GM12878 (cell line): ENCODE measurements at regions of chr14 and their contacts with region 1.

Region 1: DNA sequence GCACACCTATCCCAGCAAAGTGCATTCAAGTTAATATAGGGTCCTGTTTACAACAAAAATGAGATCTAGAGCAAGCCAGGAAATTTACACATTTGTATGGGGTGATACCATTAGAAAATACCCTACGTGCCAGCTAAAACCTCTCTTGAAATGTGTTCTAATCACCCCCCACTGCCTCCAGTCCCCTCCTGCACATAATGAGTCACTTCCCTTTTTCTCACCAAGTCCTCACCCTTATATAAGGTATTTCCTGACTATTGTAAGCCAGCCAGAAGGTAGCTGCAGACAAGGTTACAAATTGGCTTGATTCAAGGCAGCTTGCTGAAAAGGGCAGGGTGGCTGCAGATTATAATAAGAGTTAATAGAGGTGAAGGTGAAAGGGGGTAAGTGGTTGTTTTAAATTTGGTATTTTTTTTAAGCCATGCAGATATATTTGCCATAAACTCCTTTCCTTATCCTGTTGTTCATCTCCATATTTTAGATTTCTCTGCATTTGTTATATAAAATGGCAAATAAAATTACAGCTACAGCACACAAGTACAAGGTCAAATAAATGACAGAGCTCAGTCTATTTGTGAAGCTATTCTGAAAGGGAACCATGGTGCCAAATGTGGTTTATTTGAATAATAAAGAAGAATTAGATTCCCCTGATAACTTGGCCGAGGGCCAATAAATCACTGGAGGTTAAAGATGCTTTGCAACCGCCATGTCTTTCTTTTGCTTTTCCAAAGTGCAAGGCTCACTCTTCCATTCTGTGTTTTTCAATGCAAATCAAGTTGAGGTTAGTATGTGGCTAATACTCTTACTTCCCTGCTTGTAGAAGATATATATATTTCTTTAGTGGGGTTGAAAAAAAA is 385.9 kb downstream of the EGLN3 start:
- DNase-seq: peak; percentile 57
- ATAC-seq: peak; percentile 92
- H3K4me3 ChIP-seq: no peak overlapping the region
- H3K27ac ChIP-seq: no peak overlapping the region
- H3K4me1 ChIP-seq: no peaks in the 10 kb centered on the region
- H3K27me3 ChIP-seq: peaks cover 0 to 3% of the 10 kb centered on the region in 2 experiments; a peak in 1 of 4 replicates
- CTCF ChIP-seq: no peak
- EP300 ChIP-seq: peak in 1 of 2 experiments; percentile 70; a peak in 1 of 4 replicates
- POLR2A ChIP-seq: no peak
- RAD21 ChIP-seq: no peak

Region 2: GRCh38 chr14:33516898-33517436 is 48.0 kb before region 1 on chr14:
- CTCF ChIA-PET with region 1: interaction called, 18 read pairs
- POLR2A ChIA-PET with region 1: interaction called, 69 read pairs
- RAD21 ChIA-PET with region 1: interaction called, 110 read pairs
- SMC1A ChIA-PET with region 1: interaction called, 145 read pairs
- in situ Hi-C with region 1: no loop called
- intact Hi-C with region 1: no loop called
- DNase-seq: no peak
- ATAC-seq: peak; percentile 16; the same call in 1 of the 3 replicates
- H3K4me3 ChIP-seq: no peak overlapping the region
- H3K27ac ChIP-seq: no peak overlapping the region
- H3K4me1 ChIP-seq: no peaks in the 10 kb centered on the region
- H3K27me3 ChIP-seq: peaks cover 0 to 2% of the 10 kb centered on the region in 2 experiments; a peak in 2 of 4 replicates
- CTCF ChIP-seq: no peak
- EP300 ChIP-seq: no peak
- POLR2A ChIP-seq: no peak
- RAD21 ChIP-seq: no peak

Region 3: DNA sequence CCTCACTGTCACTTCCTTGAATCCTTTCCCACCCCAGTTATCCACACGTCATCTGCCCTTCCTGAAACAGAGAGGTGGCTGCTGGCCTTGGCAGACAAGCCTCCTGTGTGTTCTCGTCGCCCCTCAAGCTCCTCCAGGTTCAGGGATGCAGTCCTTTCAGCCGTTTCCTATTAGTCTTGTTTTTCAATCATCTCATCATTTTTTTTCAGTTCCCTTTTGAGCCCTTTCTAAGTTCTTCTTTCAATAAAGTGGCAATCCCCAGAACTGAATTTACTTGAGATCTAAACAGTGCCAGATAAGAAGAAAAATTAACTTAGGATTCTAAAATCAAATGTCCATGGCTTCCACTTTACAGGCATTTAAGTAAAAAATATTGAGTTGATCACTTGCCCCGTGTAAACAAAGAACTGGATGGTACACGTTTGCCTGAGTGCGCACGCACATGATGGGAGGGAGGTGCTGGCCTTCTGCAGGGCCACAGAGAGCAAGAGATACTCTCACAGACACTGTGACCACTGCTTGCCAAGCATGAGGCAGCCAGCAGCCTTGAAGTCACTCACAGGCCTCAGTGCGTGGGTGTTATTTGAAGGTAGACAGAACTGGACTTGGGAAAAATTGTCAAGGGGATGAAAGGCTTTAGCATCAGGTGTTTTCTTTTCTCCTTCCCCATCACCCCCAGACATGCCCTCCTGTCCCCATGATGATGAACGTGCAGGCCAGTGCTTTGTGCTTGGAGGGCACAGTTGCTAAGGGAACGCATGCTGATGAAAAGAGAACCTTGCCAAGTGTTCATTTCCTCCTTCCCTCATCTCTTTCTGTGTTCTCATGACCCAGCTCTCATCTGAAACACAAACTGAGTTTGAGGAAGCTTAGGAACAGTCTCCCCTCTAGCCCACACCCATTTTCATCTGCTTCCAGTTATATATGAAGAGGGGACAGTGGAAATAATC is 22.4 kb before region 1 on chr14:
- CTCF ChIA-PET with region 1: interaction called, 14 read pairs
- POLR2A ChIA-PET with region 1: interaction called, 86 read pairs
- RAD21 ChIA-PET with region 1: interaction called, 176 read pairs
- SMC1A ChIA-PET with region 1: interaction called, 215 read pairs
- in situ Hi-C with region 1: no loop called
- intact Hi-C with region 1: no loop called
- DNase-seq: no peak
- ATAC-seq: peak; percentile 63
- H3K4me3 ChIP-seq: no peak overlapping the region
- H3K27ac ChIP-seq: no peak overlapping the region
- H3K4me1 ChIP-seq: peaks cover 5% of the 10 kb centered on the region; the same call in 1 of the 2 replicates
- H3K27me3 ChIP-seq: no peaks in the 10 kb centered on the region
- CTCF ChIP-seq: no peak
- EP300 ChIP-seq: no peak
- POLR2A ChIP-seq: no peak
- RAD21 ChIP-seq: no peak

Region 4: DNA sequence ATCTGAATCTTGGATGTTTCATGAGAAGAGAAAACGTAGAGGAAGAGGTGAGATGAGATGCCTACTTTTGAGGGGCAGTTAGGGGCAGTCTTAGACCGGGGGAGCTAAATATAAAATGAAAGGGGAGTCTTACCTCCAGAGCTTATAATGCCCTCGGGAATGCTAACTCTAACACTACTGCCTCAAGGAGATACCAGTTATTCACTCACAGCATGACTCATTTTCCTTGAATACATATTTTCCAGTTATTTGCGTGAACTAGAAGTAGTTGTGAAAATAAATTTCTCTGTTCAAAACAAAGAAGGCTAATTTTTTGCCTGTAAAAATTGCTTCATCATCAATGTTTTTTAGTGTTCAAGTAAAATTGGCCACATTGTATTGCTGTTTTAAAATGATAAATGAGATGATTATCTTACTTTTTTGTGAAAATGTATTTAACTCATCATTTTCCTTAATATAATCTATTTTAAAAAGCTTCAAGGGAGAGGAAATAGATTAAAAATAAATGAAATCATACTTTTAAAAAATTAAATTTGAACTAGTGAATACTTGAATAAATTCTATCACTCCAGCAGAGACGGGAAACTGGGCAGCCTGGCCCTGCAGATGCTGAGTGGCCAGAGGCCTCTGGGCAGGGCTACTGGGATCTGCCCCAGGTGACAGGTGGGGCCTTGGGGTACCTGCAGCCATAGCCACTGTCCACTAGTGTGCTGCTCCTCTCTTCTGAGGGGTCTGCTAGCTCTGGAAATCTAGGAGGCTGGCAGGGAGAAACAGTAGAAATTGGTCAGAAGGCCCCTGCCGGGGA is 46.6 kb after region 1 on chr14:
- CTCF ChIA-PET with region 1: interaction called, 3 read pairs
- POLR2A ChIA-PET with region 1: interaction called, 3 read pairs
- RAD21 ChIA-PET with region 1: interaction called, 39 read pairs
- SMC1A ChIA-PET with region 1: interaction called, 8 read pairs
- in situ Hi-C with region 1: no loop called
- intact Hi-C with region 1: no loop called
- DNase-seq: no peak
- ATAC-seq: peak; percentile 29; the same call in 1 of the 3 replicates
- H3K4me3 ChIP-seq: no peak overlapping the region
- H3K27ac ChIP-seq: no peak overlapping the region
- H3K4me1 ChIP-seq: no peaks in the 10 kb centered on the region
- H3K27me3 ChIP-seq: no peaks in the 10 kb centered on the region
- CTCF ChIP-seq: no peak
- EP300 ChIP-seq: no peak
- POLR2A ChIP-seq: no peak
- RAD21 ChIP-seq: no peak

Region 5: DNA sequence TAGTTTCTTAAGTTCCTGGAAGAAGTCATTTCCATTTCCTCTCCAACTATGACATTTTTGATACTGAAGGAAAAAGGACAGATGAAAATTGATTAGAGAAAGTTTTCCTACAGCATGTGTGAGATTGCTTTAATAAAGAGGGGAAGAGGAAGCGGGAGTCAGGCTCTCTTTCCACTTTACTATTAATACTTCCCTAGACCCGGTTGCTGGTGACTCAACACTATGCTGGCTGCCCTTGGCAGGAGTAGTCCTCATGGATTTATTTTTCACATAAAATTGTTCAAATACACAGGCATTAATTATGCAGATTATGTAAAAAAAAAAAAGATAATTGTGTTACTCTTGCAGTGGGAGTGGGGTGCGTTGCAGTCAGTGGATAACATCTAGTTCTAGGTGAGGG is 92.5 kb after region 1 on chr14:
- CTCF ChIA-PET with region 1: no interaction called
- POLR2A ChIA-PET with region 1: no interaction called
- RAD21 ChIA-PET with region 1: interaction called, 17 read pairs
- SMC1A ChIA-PET with region 1: interaction called, 12 read pairs
- in situ Hi-C with region 1: no loop called
- intact Hi-C with region 1: no loop called
- DNase-seq: no peak
- ATAC-seq: no peak
- H3K4me3 ChIP-seq: no peak overlapping the region
- H3K27ac ChIP-seq: no peak overlapping the region
- H3K4me1 ChIP-seq: no peaks in the 10 kb centered on the region
- H3K27me3 ChIP-seq: no peaks in the 10 kb centered on the region
- CTCF ChIP-seq: no peak
- EP300 ChIP-seq: no peak
- POLR2A ChIP-seq: no peak
- RAD21 ChIP-seq: no peak